ENCODE measurements at regions of chr9 and their contacts with region 1.

Region 1: DNA sequence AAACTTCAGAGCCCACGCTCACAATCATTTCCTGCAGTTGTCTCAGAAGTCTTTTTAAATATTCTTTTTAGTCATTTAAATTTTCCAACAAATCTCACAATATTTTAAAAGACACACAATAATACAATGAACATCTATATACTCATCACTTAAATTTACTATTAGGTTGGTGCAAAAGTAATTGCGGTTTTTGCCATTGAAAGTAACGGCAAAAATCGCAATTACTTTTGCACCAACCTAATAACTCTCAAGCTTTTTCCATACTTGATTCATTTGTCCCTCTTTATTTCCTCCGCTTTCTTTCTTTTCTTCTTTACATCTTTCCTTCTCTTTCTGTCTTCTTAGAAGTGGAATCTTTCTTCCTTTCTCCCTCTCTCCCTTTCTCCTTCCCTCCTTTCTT is 19.2 kb upstream of the TMEM215 start:
- DNase-seq: no peak
- ATAC-seq: no peak
- H3K4me3 ChIP-seq: no peak overlapping the region
- H3K27ac ChIP-seq: no peak overlapping the region
- H3K4me1 ChIP-seq: no peaks in the 10 kb centered on the region
- H3K27me3 ChIP-seq: no peaks in the 10 kb centered on the region
- CTCF ChIP-seq: no peak

Region 2: GRCh38 chr9:32487981-32488380 is 276.2 kb before region 1 on chr9:
- intact Hi-C with region 1: no loop called
- DNase-seq: no peak
- ATAC-seq: no peak
- H3K4me3 ChIP-seq: no peak overlapping the region
- H3K27ac ChIP-seq: no peak overlapping the region
- H3K4me1 ChIP-seq: no peaks in the 10 kb centered on the region
- H3K27me3 ChIP-seq: no peaks in the 10 kb centered on the region
- CTCF ChIP-seq: no peak

Region 3: DNA sequence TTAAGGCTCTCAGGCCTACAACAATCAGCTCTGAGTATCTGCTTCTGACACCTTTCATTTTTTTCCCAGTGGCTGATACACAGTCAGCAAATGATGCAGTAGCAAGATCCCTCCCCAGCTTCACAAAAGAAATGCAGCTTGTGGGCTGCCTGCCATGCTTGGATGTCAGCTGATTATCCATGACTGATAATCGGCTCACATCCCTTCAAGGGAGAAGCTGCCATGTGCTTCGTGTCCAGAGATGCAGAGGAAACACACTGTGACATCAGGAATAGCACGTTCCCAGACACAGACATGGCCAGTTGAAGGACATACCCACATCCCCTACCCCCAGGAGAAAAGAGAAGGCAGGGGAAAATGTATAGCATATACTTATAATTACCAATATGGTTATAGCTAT is 47.1 kb after region 1 on chr9:
- intact Hi-C with region 1: loop called (anchors 5 kb)
- DNase-seq: no peak
- ATAC-seq: no peak
- H3K4me3 ChIP-seq: no peak overlapping the region
- H3K27ac ChIP-seq: no peak overlapping the region
- H3K4me1 ChIP-seq: no peaks in the 10 kb centered on the region
- H3K27me3 ChIP-seq: peaks cover 6% of the 10 kb centered on the region
- CTCF ChIP-seq: no peak

Measured in lower lobe of right lung (tissue), 2 donors.